Activated T-helper 1 cell treated with anti-CD3 and anti-CD28 coated beads, Interleukin-12 subunit alpha, Interleukin-12 subunit beta, Interleukin-2, Interleukin-4 antibody, amounts not matched to agents 30 ng/mL and 10 ng/mL and 1 ng/mL, durations not matched to agents 14 hours and 24 hours and 36 hours (primary cell): ENCODE measurements at regions of chr5 and their contacts with region 1.

Region 1: GRCh38 chr5:79020861-79021561 is 35.9 kb upstream of the ARSB start:
- DNase-seq: no peak
- H3K4me3 Mint-ChIP-seq: no peak overlapping the region
- H3K27ac Mint-ChIP-seq: no peak overlapping the region
- H3K4me1 Mint-ChIP-seq: peaks cover 6% of the 10 kb centered on the region
- H3K27me3 Mint-ChIP-seq: peaks cover 59% of the 10 kb centered on the region

Region 2: GRCh38 chr5:78899922-78900362 is 121.1 kb before region 1 on chr5:
- intact Hi-C with region 1: loop called (anchors 1 kb)
- DNase-seq: no peak
- H3K4me3 Mint-ChIP-seq: no peak overlapping the region
- H3K27ac Mint-ChIP-seq: no peak overlapping the region
- H3K4me1 Mint-ChIP-seq: no peaks in the 10 kb centered on the region
- H3K27me3 Mint-ChIP-seq: no peaks in the 10 kb centered on the region

Region 3: DNA sequence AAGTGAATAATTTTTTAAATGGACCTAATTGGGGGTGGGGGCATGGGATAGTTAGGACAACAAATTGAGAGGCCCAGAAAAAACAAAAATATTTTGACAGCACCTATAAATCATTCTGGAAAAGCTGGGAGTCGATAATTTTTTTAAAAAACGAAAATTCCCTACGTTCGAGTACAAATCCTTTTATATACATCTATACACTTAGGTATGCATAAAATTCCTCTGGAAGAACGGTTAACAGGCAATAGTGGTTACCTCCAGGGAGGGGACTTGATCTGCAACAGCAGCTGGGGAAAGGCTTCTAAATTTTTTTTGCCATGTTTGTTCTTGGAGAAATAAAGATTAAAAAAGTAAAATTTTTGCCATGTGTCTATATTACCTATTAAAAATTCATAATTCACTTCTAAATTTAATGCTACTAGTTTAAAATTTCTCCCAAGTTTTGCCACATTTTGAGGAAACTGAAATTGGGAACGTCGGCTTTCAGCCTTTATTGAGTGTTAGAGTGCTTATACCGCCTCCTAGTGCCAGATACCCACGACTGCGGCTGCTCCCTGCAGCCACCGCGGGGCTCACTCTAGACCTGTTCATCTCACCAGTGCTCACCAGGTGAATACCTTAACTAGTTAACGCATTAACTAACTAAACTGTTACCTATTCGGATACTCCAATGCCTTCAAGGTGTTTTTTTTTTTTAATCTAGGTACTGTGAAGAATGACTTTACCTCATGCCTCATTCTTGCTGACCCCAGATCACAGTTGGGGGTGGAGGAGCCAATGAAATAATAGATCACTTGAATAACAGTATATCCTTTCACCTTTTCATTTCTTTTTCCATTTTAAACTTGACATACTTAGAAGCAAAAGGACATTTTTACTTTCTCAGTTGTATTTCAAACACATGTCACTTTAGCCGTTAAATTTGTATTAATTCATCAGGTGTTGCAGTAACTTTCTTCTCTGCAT is 88.8 kb after region 1 on chr5:
- intact Hi-C with region 1: loop called (anchors 1 kb)
- DNase-seq: no peak
- H3K4me3 Mint-ChIP-seq: no peak overlapping the region
- H3K27ac Mint-ChIP-seq: no peak overlapping the region
- H3K4me1 Mint-ChIP-seq: no peaks in the 10 kb centered on the region
- H3K27me3 Mint-ChIP-seq: peaks cover 62% of the 10 kb centered on the region

Region 4: GRCh38 chr5:79464695-79465332 is 443.8 kb after region 1 on chr5:
- intact Hi-C with region 1: loop called (anchors 1 kb)
- DNase-seq: no peak
- H3K4me3 Mint-ChIP-seq: no peak overlapping the region
- H3K27ac Mint-ChIP-seq: no peak overlapping the region
- H3K4me1 Mint-ChIP-seq: no peaks in the 10 kb centered on the region
- H3K27me3 Mint-ChIP-seq: peaks cover 2% of the 10 kb centered on the region

Region 5: DNA sequence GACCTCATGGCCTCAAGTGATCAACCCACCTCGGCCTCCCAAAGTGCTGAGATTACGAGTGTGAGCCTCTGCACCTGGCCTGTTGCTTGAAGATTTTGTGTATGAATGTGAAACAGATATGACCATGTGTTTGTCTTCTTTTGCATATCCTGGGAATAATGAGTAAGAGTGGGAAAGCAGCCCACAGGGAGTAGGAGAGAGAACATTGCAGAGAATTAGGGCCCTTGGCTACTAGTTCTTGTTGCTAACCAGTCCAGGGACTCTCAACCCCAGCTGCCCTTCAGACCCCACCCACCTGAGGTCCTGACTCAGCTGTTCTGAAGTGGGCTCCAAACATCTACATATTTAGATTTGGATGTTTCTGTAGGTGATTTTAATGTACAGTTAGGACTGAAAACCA is 844.6 kb after region 1 on chr5:
- intact Hi-C with region 1: loop called (anchors 10 kb)
- DNase-seq: no peak
- H3K4me3 Mint-ChIP-seq: no peak overlapping the region
- H3K27ac Mint-ChIP-seq: no peak overlapping the region
- H3K4me1 Mint-ChIP-seq: no peaks in the 10 kb centered on the region
- H3K27me3 Mint-ChIP-seq: peaks cover 19% of the 10 kb centered on the region